GM18951 (cell line): ENCODE measurements at regions of chr6 and their contacts with region 1.

Region 1: DNA sequence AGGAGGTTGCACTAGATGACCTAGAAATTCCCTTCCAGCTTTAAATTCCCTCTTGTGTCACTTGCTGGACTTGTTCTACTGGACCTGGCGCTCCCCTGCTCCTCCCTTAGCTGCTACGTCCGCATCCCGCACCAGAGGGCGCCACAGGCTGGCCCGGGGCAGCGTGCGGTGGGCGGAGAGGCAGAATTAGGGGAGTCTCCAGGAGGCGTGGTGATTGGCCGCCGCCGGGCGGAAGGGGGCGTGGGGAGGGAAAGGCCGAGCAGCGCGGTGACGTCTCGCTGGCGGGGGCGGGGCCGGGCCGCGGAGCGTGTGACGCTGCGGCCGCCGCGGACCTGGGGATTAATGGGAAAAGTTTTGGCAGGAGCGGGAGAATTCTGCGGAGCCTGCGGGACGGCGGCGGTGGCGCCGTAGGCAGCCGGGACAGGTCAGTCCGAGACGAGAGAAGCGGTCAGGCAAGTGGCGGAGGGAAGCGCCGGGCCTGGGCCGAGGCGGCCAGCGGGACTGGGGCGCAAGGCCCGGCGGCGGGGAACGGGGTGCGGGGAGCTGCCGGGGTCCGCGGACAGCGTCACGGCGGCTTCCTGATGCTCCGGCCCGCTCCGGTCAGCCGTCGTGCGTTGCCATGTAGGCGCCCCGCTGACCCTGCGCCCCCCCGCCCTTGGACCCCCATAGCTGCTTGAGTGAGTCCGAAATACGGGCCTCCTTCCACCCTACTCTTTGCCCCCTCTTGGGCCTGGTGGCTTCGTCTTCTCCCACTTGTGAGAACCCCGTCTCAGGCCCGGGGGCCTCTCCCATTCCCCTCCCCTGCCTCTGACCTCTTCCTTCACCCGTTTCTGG is at the start of gene PPARD:
- POLR2A ChIP-seq: peak; percentile 63

Region 2: GRCh38 chr6:35415065-35415991 is 72.9 kb after region 1 on chr6:
- in situ Hi-C with region 1: no loop called
- POLR2A ChIP-seq: no peak

Region 3: GRCh38 chr6:35468181-35468979 is 125.9 kb after region 1 on chr6 and contains the start of gene RPL10A:
- in situ Hi-C with region 1: loop called (anchors 5 kb)
- POLR2A ChIP-seq: peak; percentile 100